Aorta (tissue), 5 donors: ENCODE measurements at regions of chr20 and their contacts with region 1.

Region 1: GRCh38 chr20:11204926-11205768 is 531.3 kb upstream of the JAG1 start:
- DNase-seq: peak in 1 of 2 donors; percentile 65
- ATAC-seq: peak; percentile 80
- H3K4me3 ChIP-seq: no peak overlapping the region
- H3K27ac ChIP-seq: peak overlapping the region in 1 of 2 donors; percentile 44
- H3K4me1 ChIP-seq: peaks cover 0 to 3% of the 10 kb centered on the region in 2 donors
- H3K27me3 ChIP-seq: no peaks in the 10 kb centered on the region

Region 2: GRCh38 chr20:10219452-10219791 is 985.7 kb before region 1 on chr20:
- intact Hi-C with region 1: no loop called
- DNase-seq: peak; percentile 85 to 96
- ATAC-seq: peak; percentile 92
- H3K4me3 ChIP-seq: peak overlapping the region; percentile 36 to 62
- H3K27ac ChIP-seq: peak overlapping the region in 1 of 2 donors; percentile 39
- H3K4me1 ChIP-seq: no peaks in the 10 kb centered on the region
- H3K27me3 ChIP-seq: peaks cover 0 to 2% of the 10 kb centered on the region in 2 donors

Region 3: DNA sequence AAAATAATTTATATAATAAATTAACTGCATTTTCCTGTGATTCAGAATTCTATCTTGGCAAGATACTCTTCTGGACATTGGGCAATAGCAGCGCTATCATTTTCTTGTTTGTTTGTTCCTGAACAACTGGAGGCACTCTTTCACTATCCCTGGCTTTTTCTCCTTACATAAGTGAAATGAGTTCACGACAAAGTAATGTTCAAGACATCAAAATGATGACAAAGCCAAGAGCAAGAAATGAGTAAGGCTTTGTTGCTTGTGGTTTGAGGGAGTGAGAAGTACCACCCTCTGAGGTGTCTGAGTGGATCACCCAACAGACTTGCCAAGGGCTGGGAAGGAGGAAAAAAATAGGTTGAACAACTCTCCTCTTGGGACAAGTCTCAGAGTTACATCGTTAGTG is 64.8 kb before region 1 on chr20:
- intact Hi-C with region 1: loop called in 1 of 2 experiments (anchors 10 kb)
- DNase-seq: no peak
- ATAC-seq: no peak
- H3K4me3 ChIP-seq: no peak overlapping the region
- H3K27ac ChIP-seq: no peak overlapping the region
- H3K4me1 ChIP-seq: peaks cover 0 to 2% of the 10 kb centered on the region in 2 donors
- H3K27me3 ChIP-seq: no peaks in the 10 kb centered on the region

Region 4: DNA sequence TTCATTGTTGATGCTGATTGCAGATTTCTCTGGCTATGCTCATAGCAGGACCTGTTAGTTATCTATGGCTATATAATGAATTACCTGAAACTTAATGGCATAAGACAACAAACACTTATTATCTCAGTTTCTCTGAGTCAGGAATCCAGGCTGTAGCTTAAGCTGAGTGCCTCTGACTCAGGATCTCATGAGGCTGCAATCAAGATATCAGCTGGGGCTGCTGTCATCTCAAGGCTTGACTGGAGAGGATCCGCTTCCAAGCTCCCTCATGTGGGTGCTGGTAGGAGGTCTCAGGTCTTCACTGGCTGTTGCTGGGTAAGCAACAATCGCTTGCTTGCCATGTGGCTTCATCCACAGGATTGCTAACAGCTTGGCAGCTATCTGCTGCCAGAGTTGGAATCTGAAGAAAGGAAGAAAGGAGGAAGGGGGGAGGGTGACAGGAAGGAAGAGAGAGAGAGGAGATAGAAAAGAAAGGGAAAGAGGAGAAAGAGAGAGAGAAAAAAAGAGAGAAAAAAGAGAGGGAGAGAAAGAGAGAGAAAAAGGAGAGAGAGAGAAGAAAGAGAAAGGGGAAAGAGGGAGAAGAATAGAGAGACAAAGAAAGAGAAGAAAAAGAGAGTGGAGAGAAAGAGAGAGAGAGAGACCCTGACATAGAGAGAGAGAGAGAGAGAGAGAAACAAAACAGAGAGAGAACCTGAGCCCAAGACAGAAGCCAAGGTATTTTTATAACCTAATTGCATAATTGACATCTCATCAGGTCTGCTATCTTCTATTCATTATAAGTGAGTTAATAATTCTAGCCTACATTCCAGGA is 133.6 kb after region 1 on chr20:
- intact Hi-C with region 1: no loop called
- DNase-seq: no peak
- ATAC-seq: no peak
- H3K4me3 ChIP-seq: no peak overlapping the region
- H3K27ac ChIP-seq: no peak overlapping the region
- H3K4me1 ChIP-seq: no peaks in the 10 kb centered on the region
- H3K27me3 ChIP-seq: no peaks in the 10 kb centered on the region

Region 5: GRCh38 chr20:11522366-11522741 is 317.2 kb after region 1 on chr20:
- intact Hi-C with region 1: no loop called
- DNase-seq: no peak
- ATAC-seq: no peak
- H3K4me3 ChIP-seq: no peak overlapping the region
- H3K27ac ChIP-seq: no peak overlapping the region
- H3K4me1 ChIP-seq: no peaks in the 10 kb centered on the region
- H3K27me3 ChIP-seq: no peaks in the 10 kb centered on the region

Region 6: DNA sequence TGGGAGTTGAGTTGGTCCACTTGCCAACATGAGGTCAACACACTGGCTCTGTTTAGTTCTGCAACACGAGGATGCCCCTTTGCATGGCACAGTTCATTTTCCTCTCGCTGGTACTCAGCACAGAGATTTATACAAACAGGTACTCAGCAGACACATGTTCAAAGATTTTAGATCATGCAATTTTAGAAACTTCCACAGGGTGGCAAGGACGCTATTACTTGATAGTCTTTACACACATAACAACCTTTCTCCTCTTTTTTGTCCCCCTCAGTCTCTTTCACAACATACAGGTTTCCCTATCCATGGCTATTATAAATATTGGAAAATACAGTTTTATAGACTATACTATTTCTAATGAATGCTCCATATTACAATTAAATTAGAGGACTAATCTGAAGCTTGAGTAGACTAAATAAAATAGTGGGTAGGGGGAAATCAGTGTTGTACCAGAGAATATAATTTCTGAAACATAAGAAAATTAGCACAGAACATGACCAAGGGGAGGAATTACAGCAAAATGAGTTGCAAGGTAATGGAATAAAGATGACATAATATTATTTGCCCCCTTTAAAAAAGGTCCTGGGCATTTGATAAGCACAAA is 380.7 kb after region 1 on chr20:
- intact Hi-C with region 1: no loop called
- DNase-seq: no peak
- ATAC-seq: no peak
- H3K4me3 ChIP-seq: no peak overlapping the region
- H3K27ac ChIP-seq: no peak overlapping the region
- H3K4me1 ChIP-seq: no peaks in the 10 kb centered on the region
- H3K27me3 ChIP-seq: no peaks in the 10 kb centered on the region